ENCODE measurements at regions of chr14 and their contacts with region 1.

Region 1: GRCh38 chr14:76050797-76051392 is 65.3 kb downstream of the IFT43 start:
- DNase-seq: no peak
- ATAC-seq: peak; percentile 76 to 91 (median 86)
- H3K4me3 ChIP-seq: no peak overlapping the region
- H3K27ac ChIP-seq: no peak overlapping the region
- H3K4me1 ChIP-seq: no peaks in the 10 kb centered on the region
- H3K27me3 ChIP-seq: no peaks in the 10 kb centered on the region
- CTCF ChIP-seq: peak; percentile 82

Region 2: DNA sequence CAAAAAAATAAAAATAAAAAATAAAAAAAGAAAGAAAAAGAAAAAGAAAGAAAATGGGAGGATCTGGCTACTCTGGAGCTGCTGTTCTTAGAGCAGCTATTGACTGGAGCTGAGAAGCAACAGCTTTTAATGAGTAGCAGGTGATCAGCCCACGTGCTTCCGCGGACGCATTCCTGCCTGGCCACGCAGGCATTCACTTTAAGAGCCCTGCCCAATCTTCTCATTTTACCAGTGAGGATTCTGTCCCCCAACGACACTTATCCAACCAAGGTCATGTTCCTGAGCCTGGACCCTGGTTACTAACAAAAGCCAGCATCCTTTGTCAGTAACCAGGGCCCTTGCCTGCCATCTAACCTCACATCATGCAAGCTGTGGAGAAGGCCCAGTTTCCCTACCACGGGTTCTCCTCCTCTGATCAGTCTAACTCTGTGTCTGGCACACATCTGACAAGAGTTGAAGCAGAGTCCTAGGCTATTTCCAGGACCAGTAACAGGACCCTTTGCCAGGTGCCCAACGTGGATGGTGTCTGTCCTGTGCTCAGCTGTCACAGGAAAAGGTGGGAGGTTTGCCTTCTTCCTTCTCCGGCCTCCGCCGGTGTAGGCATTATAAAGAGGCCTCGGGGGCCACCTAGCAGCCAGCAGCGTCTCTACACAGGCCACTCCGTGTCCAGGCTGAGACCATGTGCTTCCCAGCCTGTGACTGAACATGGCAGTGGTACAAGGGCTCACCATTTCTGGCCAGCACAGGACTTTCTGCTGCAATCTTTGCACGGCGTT is 39.9 kb after region 1 on chr14:
- intact Hi-C with region 1: loop called (anchors 2 kb)
- DNase-seq: peak; percentile 70 to 89
- ATAC-seq: peak; percentile 88 to 93 (median 90)
- H3K4me3 ChIP-seq: no peak overlapping the region
- H3K27ac ChIP-seq: peak overlapping the region; percentile 91
- H3K4me1 ChIP-seq: peaks cover 57% of the 10 kb centered on the region
- H3K27me3 ChIP-seq: no peaks in the 10 kb centered on the region
- CTCF ChIP-seq: peak; percentile 64

Region 3: GRCh38 chr14:76352639-76353281 is 301.9 kb after region 1 on chr14:
- intact Hi-C with region 1: loop called (anchors 1 to 5 kb)
- DNase-seq: peak; percentile 64 to 76
- ATAC-seq: peak; percentile 71 to 87 (median 82)
- H3K4me3 ChIP-seq: peak overlapping the region; percentile 49
- H3K27ac ChIP-seq: no peak overlapping the region
- H3K4me1 ChIP-seq: peaks cover 4% of the 10 kb centered on the region
- H3K27me3 ChIP-seq: no peaks in the 10 kb centered on the region
- CTCF ChIP-seq: peak; percentile 88

Region 4: GRCh38 chr14:76386915-76387782 is 336.3 kb after region 1 on chr14:
- intact Hi-C with region 1: loop called (anchors 2 to 5 kb)
- DNase-seq: peak; percentile 65 to 70
- ATAC-seq: peak; percentile 88 to 95 (median 92)
- H3K4me3 ChIP-seq: no peak overlapping the region
- H3K27ac ChIP-seq: no peak overlapping the region
- H3K4me1 ChIP-seq: no peaks in the 10 kb centered on the region
- H3K27me3 ChIP-seq: peaks cover 0 to 3% (median 0%) of the 10 kb centered on the region in 3 donors
- CTCF ChIP-seq: peak; percentile 97

Region 5: DNA sequence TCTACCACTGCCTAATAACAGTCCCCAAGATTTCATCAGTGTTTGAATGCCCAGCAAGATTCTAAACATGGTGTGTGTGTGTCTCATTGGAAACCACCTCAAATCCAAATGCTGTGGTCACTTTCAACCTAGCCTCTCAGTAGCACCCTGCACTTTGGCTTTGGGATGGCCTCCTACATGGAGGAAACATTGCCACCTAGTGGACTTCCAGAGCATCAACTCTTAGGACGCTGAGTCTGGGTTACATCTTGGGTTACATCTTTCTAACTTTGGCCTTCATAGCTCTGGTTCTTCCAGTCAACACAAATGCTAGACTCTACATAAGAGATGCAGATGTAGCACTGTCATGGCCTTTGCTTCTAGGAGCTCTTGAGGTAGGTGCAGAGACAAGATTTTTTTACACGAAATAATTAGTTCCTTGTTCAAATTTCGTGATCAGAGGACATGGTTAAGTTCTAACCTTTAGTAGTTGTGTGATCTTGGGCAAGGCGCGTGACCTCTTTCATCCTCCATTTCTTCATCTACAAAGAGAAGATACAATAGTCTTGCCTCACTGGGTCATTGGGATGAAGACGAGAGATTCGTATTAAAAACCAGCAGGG is 596.9 kb after region 1 on chr14:
- intact Hi-C with region 1: loop called (anchors 10 kb)
- DNase-seq: no peak
- ATAC-seq: peak; percentile 73 to 81 (median 76)
- H3K4me3 ChIP-seq: no peak overlapping the region
- H3K27ac ChIP-seq: no peak overlapping the region
- H3K4me1 ChIP-seq: no peaks in the 10 kb centered on the region
- H3K27me3 ChIP-seq: peaks cover 0 to 2% (median 0%) of the 10 kb centered on the region in 3 donors
- CTCF ChIP-seq: peak; percentile 82

Measured in psoas muscle (tissue), 8 donors.